Activated CD4-positive, alpha-beta T cell treated with anti-CD3 and anti-CD28 coated beads, Interleukin-2, amount 10 ng/mL, durations not matched to agents 24 days and 14 days (primary cell): ENCODE measurements at regions of chr6 and their contacts with region 1.

Region 1: DNA sequence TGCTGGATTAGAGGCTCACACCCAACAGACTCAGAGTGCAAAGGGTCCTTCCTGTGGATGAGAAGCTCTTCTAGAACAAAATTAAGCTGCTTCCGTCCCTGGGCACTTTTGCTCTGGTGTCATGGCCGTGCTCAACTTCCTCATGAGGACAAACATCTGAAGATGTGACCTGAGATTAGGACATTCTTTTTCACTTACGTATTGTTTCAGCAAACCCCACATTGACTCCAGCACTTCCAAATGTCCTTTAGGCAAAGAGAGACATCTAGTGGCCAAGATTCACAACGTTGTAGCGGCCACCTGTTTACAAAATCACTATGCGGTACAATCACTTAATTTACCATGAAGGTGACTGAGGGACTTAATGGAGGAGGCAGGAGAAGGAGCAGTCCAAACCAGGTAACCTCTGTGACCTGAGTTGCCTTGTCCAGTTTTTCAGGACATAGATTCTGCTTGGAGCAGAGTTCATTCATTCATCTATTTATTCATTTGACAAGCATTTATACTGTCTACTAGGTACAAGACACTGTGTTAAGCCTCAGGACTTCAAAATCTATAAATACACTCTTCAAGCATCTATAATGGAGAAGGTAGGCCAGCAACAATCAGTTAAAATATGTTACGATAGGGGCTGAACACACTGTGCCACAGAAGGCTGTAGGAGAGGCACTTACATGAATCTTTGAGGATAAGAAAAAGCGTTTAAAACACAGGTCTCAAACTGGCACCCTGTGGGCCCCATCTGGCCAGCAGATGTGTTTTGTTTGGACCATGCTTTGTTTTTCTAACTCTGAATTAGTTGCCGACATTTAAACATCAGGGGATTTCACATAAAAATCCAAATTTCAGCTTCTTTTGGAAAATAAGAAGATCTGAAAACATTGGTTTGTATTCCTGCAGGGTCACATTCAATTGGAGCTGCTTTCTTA is 5.6 kb upstream of the ADGRF1 start:
- DNase-seq: peak; percentile 76
- H3K4me3 Mint-ChIP-seq: no peak overlapping the region
- H3K27ac Mint-ChIP-seq: no peak overlapping the region
- H3K4me1 Mint-ChIP-seq: no peaks in the 10 kb centered on the region
- H3K27me3 Mint-ChIP-seq: peaks cover 10% of the 10 kb centered on the region

Region 2: DNA sequence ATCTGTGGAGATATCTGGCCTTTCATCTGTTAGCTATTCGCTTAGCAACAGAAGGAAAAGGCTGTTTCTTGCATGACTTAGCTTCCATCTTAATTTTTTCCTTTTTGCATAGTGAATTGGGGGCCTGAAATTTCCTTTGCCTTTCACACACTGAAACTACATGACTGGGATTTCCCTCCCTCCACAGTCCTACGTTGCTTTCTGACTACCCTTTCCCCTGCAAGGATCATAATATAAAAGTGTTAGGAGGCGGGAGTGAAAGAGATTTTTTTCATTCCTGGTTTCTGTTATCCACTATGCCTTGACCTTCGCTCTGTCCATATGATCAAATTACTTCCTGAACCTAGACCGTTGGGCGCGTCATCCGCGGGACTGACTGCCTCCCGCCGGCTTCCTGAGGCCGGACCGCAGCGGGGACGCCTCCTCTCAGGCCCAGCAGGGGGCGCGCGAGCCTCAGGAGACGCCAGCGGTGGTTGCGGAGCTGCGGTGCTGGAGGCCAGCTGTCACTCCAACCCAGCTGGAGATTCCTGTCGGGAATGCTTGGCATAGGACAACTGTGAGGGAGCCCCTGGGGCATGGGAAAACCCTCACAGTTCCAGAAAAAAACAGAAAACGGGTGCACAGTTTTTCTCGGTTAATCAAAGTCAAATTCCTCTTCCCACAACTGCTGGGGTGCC is 198.9 kb before region 1 on chr6:
- intact Hi-C with region 1: loop called (anchors 2 kb)
- DNase-seq: peak; percentile 90
- H3K4me3 Mint-ChIP-seq: peak overlapping the region; percentile 72
- H3K27ac Mint-ChIP-seq: no peak overlapping the region
- H3K4me1 Mint-ChIP-seq: peaks cover 5% of the 10 kb centered on the region
- H3K27me3 Mint-ChIP-seq: peaks cover 20% of the 10 kb centered on the region

Region 3: DNA sequence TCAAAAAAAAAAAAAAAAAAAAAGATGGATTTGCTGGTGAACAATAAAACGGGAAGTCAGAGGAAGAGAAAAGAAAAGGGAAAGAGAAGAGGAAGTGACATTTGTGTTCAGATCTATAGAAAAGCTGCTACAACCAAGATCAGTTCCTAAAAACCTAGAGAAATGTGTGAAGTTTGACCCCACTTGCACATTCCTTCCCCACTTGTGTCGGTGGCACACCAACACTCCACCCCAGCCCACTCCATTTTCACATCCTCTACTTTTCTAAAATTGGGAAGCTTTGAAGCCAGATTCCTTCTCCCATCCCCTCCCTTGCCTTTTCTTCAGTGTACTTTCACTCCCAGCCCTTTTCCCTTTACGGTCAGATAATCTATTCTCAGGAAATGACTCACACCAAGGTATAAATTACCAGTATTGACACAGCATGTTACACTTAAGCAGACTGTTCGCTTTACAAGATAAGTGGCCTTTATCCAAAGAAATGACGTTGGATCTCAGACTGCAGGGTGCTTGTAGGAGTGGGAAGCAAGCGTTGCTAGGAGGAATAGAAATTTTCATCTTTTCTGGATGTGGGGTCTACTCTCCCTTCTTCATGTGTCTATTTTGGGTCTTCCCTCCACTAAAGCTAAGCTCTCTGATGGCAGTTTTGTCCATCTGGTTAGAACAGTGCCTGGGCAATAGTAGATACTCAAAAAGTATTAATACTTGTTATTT is 86.9 kb after region 1 on chr6:
- intact Hi-C with region 1: no loop called
- DNase-seq: no peak
- H3K4me3 Mint-ChIP-seq: no peak overlapping the region
- H3K27ac Mint-ChIP-seq: no peak overlapping the region
- H3K4me1 Mint-ChIP-seq: peaks cover 9% of the 10 kb centered on the region
- H3K27me3 Mint-ChIP-seq: peaks cover 2% of the 10 kb centered on the region

Region 4: DNA sequence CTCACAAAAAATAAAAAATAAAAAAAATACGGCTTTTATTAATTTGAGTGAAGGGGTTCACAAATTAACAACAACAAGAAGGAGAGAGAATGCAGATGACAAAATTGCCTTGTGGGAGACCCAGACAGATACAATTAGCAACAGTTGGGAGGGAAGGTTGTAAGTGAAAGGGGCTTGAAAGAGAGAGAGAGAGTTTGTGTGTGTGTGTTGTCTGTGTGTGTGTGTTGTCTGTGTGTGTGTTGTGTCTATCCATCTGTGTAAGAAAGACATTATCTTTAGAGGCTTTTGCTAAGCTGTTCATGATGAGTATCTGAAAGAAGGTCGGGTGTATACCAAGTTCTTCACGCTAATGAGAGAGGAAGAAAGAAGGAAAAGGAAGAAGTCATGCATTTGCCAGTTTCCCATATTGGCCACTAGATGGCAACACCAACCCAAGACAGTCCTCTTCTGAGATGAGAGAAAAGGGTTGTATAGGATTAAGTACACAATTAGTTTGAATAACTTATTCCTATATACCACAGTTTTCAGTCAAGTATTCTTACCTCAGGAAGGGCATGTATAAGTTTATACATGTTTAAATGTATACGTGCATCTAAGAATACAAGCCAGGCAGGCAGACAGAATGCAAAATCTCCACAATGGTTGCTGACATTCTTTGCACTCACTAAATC is 366.1 kb after region 1 on chr6:
- intact Hi-C with region 1: no loop called
- DNase-seq: peak; percentile 84
- H3K4me3 Mint-ChIP-seq: peak overlapping the region; percentile 66
- H3K27ac Mint-ChIP-seq: peak overlapping the region; percentile 84
- H3K4me1 Mint-ChIP-seq: peaks cover 22% of the 10 kb centered on the region
- H3K27me3 Mint-ChIP-seq: peaks cover 19% of the 10 kb centered on the region